ENCODE measurements at regions of chr15 and their contacts with region 1.

Region 1: DNA sequence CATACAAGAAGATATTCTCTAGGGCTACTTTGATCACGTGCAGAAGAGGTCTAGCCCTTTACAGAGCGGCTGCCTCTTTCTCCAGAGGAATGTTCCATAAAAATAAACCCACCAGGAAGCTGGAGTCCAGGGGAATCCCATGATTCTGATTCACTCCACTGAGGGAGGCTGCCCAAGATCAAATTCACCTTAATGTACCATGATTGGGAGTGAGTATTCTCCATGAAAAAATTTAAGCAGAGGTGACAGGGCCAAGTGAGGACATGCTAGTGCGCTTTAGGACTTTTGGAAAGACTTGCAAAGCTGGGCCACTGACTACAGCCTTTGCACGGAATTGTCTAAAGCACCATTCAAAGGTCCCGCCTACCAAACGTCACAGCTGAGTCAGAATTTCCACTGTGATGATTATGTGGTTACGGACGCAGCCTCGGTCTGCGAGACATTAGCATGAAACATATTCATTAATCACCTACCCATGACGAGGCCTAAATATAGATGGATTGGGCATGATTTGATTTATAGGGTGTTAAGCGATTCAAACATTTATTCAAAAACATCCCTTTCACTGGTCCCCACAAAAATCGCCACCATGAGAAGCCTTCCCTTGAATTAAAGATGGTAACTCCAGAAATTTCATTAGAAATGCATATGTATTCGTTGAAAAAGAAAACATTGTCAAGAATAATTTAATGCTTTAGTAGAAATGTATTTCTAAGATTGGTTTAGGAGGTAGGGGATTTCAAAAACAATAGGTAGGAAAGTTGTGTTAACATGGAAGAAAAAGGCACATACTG is 152.6 kb downstream of the GREM1 start:
- DNase-seq: peak; percentile 98
- H3K4me3 ChIP-seq: no peak overlapping the region
- CTCF ChIP-seq: no peak

Region 2: GRCh38 chr15:32706704-32707103 is 163.7 kb before region 1 on chr15:
- CTCF ChIA-PET with region 1: no interaction called
- POLR2A ChIA-PET with region 1: no interaction called
- DNase-seq: no peak
- H3K4me3 ChIP-seq: no peak overlapping the region
- CTCF ChIP-seq: no peak

Region 3: DNA sequence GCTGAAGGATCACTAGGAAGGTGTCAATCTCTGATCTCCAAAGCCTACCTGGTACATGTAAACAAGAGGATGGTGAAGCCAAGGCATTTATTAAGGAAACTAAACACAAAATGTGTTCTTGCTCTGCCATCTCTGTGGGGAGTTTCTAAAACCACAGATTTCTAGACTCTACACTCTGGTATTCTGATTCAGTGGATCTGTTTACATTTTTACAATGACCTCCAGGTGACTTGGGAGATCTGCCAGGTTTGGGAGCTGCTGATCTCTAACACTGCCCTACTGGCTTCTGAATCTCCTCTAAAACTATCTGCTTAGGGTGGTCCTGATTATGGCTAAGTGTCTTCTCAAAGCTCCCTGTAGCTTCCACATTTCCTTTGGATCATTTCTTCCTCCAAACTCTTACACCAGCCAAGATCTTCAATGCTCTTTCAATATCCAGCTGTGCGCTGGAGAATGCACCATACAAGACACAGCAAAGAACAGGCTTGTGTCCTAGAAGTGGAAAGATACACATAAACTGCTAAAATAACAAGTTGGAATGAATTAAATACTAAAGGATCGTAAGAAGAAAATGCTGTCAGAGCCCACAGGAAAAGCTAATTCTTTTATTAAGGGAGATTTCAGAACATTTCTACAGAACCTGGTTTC is 80.0 kb before region 1 on chr15:
- CTCF ChIA-PET with region 1: no interaction called
- POLR2A ChIA-PET with region 1: no interaction called
- DNase-seq: no peak
- H3K4me3 ChIP-seq: no peak overlapping the region
- CTCF ChIP-seq: no peak

Region 4: DNA sequence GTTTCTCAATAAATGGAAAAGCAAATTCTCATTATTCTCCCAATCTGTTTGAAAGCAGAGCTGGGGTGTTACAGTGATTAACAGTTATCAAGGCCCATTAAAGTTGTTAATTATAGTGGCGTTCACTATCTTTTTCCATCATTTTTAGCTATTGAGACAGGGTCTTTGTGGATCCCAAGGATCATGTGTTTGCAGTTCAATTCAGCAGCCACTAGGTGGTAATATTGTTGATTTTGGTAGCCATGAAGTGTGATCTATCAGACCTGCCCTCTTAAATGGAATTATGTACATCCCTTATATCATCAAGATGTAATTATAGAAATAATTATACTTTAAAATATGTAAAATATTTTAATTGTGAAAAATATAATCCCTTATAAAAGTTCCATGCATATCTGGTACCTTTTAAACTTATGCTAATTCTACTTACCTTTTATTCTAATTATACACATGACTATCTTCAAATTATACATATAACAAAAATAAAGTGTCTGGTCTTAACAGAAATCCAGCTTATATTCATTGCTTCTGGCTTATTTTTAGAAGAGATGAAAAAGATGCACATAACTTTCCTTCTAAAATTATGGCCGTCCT is 26.2 kb before region 1 on chr15:
- CTCF ChIA-PET with region 1: interaction called, 17 read pairs
- POLR2A ChIA-PET with region 1: interaction called, 7 read pairs
- DNase-seq: no peak
- H3K4me3 ChIP-seq: no peak overlapping the region
- CTCF ChIP-seq: peak; percentile 48

Region 5: GRCh38 chr15:32855942-32856341 is 14.5 kb before region 1 on chr15:
- CTCF ChIA-PET with region 1: interaction called, 5 read pairs
- POLR2A ChIA-PET with region 1: interaction called, 13 read pairs
- DNase-seq: peak; percentile 99
- H3K4me3 ChIP-seq: no peak overlapping the region
- CTCF ChIP-seq: peak; percentile 1

Region 6: DNA sequence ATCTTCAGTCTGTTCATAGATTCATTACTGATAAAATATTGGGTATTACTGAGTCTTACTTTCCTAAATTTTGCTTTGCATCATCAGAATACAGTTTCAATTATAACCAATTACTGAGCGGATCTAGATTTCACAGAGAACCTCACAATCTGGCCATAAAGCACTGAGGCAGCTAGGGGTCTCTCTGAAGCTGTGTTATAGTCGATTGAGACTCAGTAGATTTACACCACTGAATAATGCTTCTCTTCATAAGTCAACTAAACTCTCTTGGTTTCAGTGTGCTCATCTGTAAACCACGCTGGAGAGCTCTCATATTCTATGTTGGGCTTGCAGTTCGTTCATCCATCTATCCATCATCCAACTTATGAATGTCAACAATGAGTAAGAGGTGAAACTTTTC is 28.0 kb after region 1 on chr15:
- CTCF ChIA-PET with region 1: no interaction called
- POLR2A ChIA-PET with region 1: no interaction called
- DNase-seq: no peak
- H3K4me3 ChIP-seq: no peak overlapping the region
- CTCF ChIP-seq: no peak